MCF 10A (cell line): ENCODE measurements at regions of chrX and their contacts with region 1.

Region 1: DNA sequence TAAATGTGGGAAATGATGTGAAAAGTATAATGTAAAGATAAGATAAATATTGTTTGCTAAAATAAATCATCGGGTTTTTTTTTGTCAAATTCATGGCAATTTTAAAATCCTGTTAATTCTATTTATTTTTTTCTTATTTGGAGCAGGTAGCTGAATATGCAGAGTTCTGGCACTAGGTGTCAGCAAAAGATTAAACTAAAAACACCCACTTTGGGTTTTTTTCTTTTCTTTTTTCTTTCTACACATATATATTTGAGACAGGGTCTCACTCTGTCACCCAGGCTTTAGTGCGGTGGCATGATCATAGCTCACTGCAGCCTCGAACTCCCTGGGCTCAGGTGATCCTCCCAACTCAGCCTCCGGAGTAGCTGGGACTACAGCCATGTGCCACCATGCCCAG is 6.9 kb upstream of the RAP2C start:
- DNase-seq: no peak
- H3K4me3 Mint-ChIP-seq: no peak overlapping the region
- H3K27ac Mint-ChIP-seq: no peak overlapping the region
- H3K4me1 Mint-ChIP-seq: peaks cover 10% of the 10 kb centered on the region
- H3K27me3 Mint-ChIP-seq: peaks cover 73% of the 10 kb centered on the region
- CTCF ChIP-seq: peak; percentile 38

Region 2: GRCh38 chrX:131288738-131289511 is 937.2 kb before region 1 on chrX and contains the start of gene IGSF1:
- CTCF ChIA-PET with region 1: no interaction called
- POLR2A ChIA-PET with region 1: no interaction called
- intact Hi-C with region 1: no loop called
- DNase-seq: peak; percentile 21
- H3K4me3 Mint-ChIP-seq: no peak within 1 kb of the TSS
- H3K27ac Mint-ChIP-seq: no peak within 1 kb of the TSS
- H3K4me1 Mint-ChIP-seq: no peaks in the 10 kb centered on the region
- H3K27me3 Mint-ChIP-seq: peaks cover 89% of the 10 kb centered on the region
- CTCF ChIP-seq: no peak
- total RNA-seq, gene IGSF1: not detected in 2 replicates

Region 3: DNA sequence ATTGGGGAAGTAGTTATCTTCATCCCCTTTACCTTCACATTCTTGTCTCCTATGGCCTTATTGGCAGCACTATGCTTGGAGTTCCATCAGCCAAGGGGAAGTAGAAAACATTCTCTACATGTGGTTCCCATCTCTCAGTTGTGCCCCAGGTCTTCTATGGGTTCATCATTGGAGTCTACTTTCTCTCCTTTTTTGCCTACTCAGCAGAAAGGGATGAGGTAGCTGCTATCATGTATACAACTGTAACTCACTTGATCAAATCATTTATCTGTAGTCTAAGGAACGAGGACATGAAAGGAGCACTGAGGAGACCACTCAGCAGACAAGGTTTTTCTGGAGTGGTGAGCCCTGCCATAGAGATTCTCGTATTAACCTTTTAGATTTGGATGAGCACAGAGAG is 801.3 kb before region 1 on chrX:
- CTCF ChIA-PET with region 1: no interaction called
- POLR2A ChIA-PET with region 1: no interaction called
- intact Hi-C with region 1: no loop called
- DNase-seq: no peak
- H3K4me3 Mint-ChIP-seq: no peak overlapping the region
- H3K27ac Mint-ChIP-seq: no peak overlapping the region
- H3K4me1 Mint-ChIP-seq: no peaks in the 10 kb centered on the region
- H3K27me3 Mint-ChIP-seq: peaks cover 53% of the 10 kb centered on the region
- CTCF ChIP-seq: no peak

Region 4: DNA sequence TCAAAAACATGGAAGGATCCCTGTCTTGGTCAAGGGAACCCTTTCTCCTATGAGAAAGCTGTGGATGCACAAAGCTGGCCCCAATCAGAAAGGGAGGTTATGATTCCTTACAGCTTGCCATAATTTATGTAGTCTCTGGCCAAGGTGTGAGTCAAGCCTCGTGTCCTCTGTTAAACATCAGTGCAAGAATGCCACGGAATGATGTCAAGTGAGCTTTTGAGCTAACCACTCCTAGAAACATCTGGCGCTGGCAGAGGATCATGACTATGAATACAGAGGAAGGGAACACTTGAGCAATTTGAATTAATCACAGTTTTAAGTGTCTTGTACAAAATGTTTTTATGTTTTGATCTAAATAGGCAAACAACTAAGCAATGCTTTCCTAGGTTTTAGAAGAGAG is 44.5 kb after region 1 on chrX:
- CTCF ChIA-PET with region 1: interaction called, 6 read pairs
- POLR2A ChIA-PET with region 1: interaction called, 12 read pairs
- intact Hi-C with region 1: loop called (anchors 2 kb)
- DNase-seq: peak; percentile 89
- H3K4me3 Mint-ChIP-seq: peak overlapping the region; percentile 2
- H3K27ac Mint-ChIP-seq: peak overlapping the region; percentile 74
- H3K4me1 Mint-ChIP-seq: peaks cover 21% of the 10 kb centered on the region
- H3K27me3 Mint-ChIP-seq: peaks cover 51% of the 10 kb centered on the region
- CTCF ChIP-seq: no peak

Region 5: DNA sequence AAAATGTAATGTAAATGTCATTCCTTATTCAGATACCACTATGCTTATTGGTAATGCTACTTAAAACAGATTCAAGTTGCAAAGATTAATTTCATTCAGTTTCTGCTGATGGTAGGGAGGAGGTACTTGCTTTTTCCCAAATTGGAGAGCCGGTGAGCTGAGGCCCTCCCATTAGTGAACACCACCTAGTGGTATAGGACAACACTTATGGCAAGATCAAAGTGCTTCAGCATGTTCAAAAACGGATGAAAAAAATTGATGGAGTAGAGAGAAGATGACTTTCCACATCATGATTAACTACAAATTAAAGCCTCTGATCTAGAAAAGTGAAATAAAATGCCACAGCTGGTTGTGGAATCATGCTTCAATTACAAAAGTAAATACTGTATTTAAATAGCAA is 149.8 kb after region 1 on chrX:
- CTCF ChIA-PET with region 1: no interaction called
- POLR2A ChIA-PET with region 1: no interaction called
- intact Hi-C with region 1: loop called (anchors 5 kb)
- DNase-seq: peak; percentile 10
- H3K4me3 Mint-ChIP-seq: no peak overlapping the region
- H3K27ac Mint-ChIP-seq: no peak overlapping the region
- H3K4me1 Mint-ChIP-seq: no peaks in the 10 kb centered on the region
- H3K27me3 Mint-ChIP-seq: peaks cover 31% of the 10 kb centered on the region
- CTCF ChIP-seq: peak; percentile 24

Region 6: DNA sequence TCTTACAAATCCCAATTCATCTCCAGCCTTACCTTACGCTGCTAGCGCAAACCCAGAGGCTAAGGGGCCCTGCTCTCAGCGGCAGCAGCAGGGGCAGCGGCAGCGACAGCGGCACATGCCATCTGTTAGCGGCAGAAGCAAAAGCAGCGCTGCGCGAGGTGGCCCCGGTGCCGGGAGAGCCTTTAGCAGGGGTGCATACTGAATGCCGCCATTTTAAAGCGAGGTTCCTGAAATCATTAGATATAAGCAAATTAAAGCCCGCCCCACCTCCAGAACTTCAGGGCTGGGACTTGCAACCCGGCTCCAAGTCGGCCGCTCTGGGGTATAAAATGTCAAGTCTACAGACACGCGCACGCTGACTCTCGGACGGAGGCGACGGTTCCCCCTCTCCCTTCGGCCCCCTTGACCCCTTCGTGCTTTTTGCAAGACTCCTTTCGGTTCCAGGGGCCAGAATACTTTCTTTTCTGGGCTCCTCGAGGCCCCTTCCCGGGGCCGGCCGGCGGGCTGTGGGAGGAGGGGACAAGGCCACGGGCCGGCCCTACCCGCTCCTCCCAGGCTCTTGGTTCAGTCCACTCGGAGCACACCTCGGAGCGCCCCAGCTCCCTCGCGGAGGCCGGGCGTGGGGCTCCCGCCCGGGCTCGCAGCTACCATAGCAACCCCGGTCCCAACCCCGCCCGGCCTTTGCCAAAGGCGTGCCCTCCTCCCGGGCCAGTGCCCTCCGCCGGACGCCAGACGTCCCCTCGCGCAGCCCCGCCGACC is 262.8 kb after region 1 on chrX and contains the start of gene MBNL3:
- CTCF ChIA-PET with region 1: interaction called, 8 read pairs
- POLR2A ChIA-PET with region 1: interaction called, 5 read pairs
- intact Hi-C with region 1: loop called (anchors 5 kb)
- DNase-seq: peak; percentile 76
- H3K4me3 Mint-ChIP-seq: peak within 1 kb of the TSS; percentile 83
- H3K27ac Mint-ChIP-seq: peak within 1 kb of the TSS; percentile 79
- H3K4me1 Mint-ChIP-seq: peaks cover 13% of the 10 kb centered on the region
- H3K27me3 Mint-ChIP-seq: peaks cover 31% of the 10 kb centered on the region
- CTCF ChIP-seq: no peak
- total RNA-seq, gene MBNL3: 14.0 and 17.7 TPM in 2 replicates

Region 7: DNA sequence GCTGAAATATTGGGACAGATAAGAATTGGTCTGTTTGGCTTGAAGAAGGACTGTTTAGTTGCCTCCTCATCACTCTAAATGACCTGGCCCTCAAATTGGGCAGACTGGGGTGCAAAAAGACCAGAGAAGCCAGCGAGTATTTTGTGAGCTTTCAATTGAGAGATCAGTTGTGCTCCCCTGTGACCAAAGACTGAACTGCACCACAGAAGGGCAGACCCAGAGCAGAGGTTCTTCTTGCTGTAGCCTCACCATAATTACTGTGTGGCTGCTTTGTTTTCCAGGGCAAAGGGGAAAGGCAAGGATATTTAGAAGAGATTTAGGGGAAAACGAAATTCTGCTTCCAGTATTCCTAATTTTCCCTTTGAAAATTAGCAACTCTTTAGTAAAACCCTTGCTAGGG is 366.7 kb after region 1 on chrX:
- CTCF ChIA-PET with region 1: no interaction called
- POLR2A ChIA-PET with region 1: interaction called, 3 read pairs
- intact Hi-C with region 1: loop called (anchors 1 kb)
- DNase-seq: no peak
- H3K4me3 Mint-ChIP-seq: no peak overlapping the region
- H3K27ac Mint-ChIP-seq: no peak overlapping the region
- H3K4me1 Mint-ChIP-seq: no peaks in the 10 kb centered on the region
- H3K27me3 Mint-ChIP-seq: peaks cover 74% of the 10 kb centered on the region
- CTCF ChIP-seq: peak; percentile 18

Region 8: DNA sequence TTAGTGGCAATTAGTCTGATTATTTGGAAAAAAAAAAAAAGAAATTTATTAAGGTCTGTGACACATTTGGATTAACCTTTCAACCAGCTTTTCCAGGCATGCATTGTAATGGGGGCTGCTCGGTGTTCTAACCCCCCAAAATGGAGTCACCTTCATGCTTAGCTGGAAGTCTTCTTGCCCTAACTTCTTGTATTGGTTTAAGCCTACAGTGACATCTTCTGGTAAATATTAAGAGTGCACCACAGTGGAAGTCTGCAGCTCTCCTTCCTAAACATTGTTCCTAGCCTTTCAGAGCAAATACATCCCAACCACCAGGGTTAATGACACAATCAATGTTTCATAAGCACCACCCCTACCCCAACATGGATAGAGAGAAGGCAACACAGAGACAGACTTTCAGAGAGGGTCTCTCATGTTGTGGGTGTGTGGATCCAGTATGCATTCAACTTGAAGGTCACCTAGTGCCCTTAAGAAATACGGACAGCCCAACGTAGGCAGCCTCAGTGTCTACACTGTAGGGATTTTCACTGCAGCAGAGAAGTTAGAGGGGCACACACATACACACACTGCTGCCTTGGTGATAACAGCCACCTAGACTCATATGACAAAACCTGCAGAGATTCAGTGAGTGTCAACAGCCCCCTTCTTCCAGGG is 405.5 kb after region 1 on chrX:
- CTCF ChIA-PET with region 1: interaction called, 11 read pairs
- POLR2A ChIA-PET with region 1: no interaction called
- intact Hi-C with region 1: loop called (anchors 1 kb)
- DNase-seq: peak; percentile 33
- H3K4me3 Mint-ChIP-seq: no peak overlapping the region
- H3K27ac Mint-ChIP-seq: no peak overlapping the region
- H3K4me1 Mint-ChIP-seq: no peaks in the 10 kb centered on the region
- H3K27me3 Mint-ChIP-seq: peaks cover 63% of the 10 kb centered on the region
- CTCF ChIP-seq: peak; percentile 38

Region 9: DNA sequence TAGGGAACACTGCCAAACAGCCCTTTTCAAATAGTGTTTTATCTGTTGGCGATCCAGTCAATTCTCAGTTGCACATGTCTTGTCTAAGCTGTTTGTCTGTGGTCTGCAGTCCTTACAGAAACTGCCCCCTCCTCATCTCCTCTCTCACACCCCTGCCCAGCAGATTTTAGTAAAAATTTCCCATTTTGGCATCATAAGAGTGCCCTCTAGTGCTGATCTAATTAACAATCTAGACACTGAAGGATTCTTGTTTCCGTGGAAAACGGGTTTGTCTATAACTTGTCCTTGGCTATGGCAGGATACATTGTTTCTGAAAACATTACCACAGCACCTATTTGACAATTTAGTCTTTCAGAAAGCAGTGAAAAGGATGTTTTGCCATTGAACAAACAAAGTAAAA is 489.8 kb after region 1 on chrX:
- CTCF ChIA-PET with region 1: interaction called, 4 read pairs
- POLR2A ChIA-PET with region 1: no interaction called
- intact Hi-C with region 1: loop called (anchors 10 kb)
- DNase-seq: no peak
- H3K4me3 Mint-ChIP-seq: no peak overlapping the region
- H3K27ac Mint-ChIP-seq: no peak overlapping the region
- H3K4me1 Mint-ChIP-seq: no peaks in the 10 kb centered on the region
- H3K27me3 Mint-ChIP-seq: peaks cover 68% of the 10 kb centered on the region
- CTCF ChIP-seq: peak; percentile 19